Activated T-helper 1 cell treated with anti-CD3 and anti-CD28 coated beads, Interleukin-12 subunit alpha, Interleukin-12 subunit beta, Interleukin-2, Interleukin-4 antibody, amounts not matched to agents 30 ng/mL and 10 ng/mL and 1 ng/mL, durations not matched to agents 14 hours and 24 hours and 36 hours (primary cell): ENCODE measurements at regions of chr1 and their contacts with region 1.

Region 1: DNA sequence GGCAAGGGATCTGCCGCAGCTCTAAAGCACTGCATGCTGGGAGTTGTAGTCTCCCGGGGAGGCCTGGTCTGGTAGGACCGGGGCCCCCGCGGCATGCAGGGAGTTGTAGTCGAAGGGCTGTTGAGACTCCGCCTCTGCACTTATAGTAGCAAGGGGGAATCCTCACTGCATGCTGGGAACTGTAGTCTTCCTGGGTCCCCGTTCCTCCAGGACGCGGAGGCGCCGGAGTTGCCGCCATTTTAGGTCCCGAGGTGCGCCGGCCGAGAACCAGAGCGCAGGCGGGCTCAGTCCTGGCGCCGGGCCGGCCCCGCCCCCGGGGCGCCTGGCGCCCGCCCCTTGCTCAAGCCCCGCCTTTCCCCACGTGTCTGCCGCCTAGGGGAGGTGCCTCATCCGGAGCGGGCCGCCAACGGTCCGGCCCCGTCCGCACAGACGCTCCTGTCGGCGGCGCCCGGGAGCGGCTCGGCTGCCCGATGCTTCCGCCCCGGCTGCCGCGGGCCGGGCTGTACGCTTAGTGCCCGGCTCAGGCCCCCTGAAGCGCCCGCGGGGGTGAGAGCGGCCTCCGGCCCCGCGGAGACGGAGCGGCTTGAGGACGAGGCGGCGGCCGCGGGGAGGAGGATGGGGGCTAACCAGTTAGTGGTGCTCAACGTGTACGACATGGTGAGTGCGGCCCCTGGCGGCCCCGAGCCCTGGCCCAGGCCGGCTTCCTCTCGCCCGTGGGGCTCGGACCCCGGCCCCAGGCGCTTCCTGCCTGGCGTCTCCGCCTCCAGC is at the start of gene DESI2:
- DNase-seq: peak; percentile 98
- H3K4me3 Mint-ChIP-seq: peak within 1 kb of the TSS; percentile 83
- H3K27ac Mint-ChIP-seq: peak within 1 kb of the TSS; percentile 75
- H3K4me1 Mint-ChIP-seq: peaks cover 18% of the 10 kb centered on the region
- H3K27me3 Mint-ChIP-seq: no peaks in the 10 kb centered on the region
- total RNA-seq, gene DESI2: 31.1 and 32.8 TPM in 2 replicates

Region 2: DNA sequence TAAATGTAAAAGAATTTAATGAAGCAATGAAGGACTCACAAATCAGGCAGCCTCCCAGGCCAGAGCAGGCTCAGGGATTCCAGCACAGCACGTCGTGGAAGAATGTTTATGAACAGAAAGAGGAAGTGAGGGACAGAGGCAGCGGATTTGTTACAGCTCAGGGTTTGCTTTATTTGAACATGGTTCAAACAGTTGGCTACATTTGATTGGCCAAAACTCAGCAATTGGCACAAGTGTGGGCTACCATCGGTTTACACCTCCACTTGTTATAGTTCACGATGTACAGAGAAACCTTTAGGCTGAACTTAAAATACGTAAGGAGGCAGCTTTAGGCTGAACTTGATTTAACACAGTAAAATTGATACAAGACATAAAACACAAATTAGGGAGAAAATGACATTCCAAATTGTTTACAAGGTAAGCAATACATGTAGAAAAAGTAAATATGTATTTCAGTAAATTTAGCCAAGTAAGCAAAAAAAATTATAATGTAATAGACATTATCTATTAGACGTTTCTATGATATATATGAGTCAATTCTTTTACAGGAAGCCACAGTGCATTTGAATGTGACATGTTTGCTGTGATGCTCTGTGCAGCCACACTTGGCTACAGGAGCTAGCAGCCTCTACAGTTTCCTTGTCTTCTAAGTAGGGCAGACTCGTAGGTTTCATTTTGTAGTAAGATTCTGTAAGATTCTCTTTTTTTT is 327.7 kb before region 1 on chr1:
- intact Hi-C with region 1: loop called (anchors 2 kb)
- DNase-seq: peak; percentile 23
- H3K4me3 Mint-ChIP-seq: peak overlapping the region; percentile 68
- H3K27ac Mint-ChIP-seq: peak overlapping the region; percentile 92
- H3K4me1 Mint-ChIP-seq: peaks cover 62% of the 10 kb centered on the region
- H3K27me3 Mint-ChIP-seq: peaks cover 3% of the 10 kb centered on the region

Region 3: GRCh38 chr1:244599937-244600350 is 52.9 kb before region 1 on chr1:
- intact Hi-C with region 1: loop called (anchors 1 kb)
- DNase-seq: peak; percentile 54
- H3K4me3 Mint-ChIP-seq: peak overlapping the region; percentile 79
- H3K27ac Mint-ChIP-seq: peak overlapping the region; percentile 94
- H3K4me1 Mint-ChIP-seq: peaks cover 22% of the 10 kb centered on the region
- H3K27me3 Mint-ChIP-seq: peaks cover 9% of the 10 kb centered on the region

Region 4: DNA sequence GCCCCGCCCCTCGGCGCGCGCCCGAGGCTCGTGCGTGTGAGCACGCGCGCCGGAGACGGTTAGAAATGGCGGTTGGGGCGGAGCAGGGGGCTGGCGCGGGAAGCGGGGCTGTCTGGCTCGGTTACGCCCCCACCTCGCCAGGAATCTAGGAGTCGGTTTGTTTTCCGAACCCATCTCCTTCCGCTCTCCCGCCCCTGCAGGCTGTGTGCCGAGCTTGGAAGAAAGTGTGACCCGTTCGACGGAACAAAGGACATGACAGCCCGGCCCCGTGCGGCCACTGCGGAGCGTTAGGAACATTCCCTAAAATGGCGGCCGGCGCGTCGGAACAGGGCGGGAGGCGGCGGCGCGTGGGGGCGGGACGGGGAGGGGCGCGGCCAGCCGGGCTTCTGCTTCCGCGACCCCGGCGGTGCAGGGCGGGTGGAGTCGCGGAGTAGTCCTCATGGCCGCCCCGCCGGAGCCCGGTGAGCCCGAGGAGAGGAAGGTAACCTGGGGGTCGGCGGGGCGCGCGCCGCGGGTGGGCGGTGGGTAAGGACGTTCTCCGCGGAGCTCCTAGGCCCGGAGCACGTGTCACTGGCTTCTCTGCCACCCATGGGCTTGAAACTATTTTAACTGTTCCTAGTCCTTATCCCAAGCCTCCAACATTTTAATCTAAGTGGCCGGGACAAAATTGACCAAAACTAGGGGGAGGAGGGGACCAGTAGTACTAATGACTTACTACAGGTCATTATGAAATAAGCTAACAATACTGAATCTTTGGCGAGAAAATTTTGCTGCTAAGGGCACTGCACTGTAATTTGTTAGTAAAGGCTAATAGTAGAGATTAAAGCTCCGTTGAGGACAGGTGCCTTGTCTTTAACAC is 182.6 kb after region 1 on chr1 and contains the start of gene COX20:
- intact Hi-C with region 1: loop called (anchors 1 kb)
- DNase-seq: peak; percentile 85
- H3K4me3 Mint-ChIP-seq: peak within 1 kb of the TSS; percentile 96
- H3K27ac Mint-ChIP-seq: peak within 1 kb of the TSS; percentile 99
- H3K4me1 Mint-ChIP-seq: peaks cover 56% of the 10 kb centered on the region
- H3K27me3 Mint-ChIP-seq: no peaks in the 10 kb centered on the region
- total RNA-seq, gene COX20: 27.4 and 27.6 TPM in 2 replicates

Region 5: GRCh38 chr1:245045087-245045881 is 392.4 kb after region 1 on chr1:
- intact Hi-C with region 1: loop called (anchors 2 kb)
- DNase-seq: no peak
- H3K4me3 Mint-ChIP-seq: no peak overlapping the region
- H3K27ac Mint-ChIP-seq: no peak overlapping the region
- H3K4me1 Mint-ChIP-seq: peaks cover 6% of the 10 kb centered on the region
- H3K27me3 Mint-ChIP-seq: no peaks in the 10 kb centered on the region